Left cardiac atrium (tissue), 4 donors: ENCODE measurements at regions of chr20 and their contacts with region 1.

Region 1: GRCh38 chr20:32779500-32780211 is 17.5 kb downstream of the DNMT3B start:
- DNase-seq: no peak
- ATAC-seq: no peak

Region 2: GRCh38 chr20:32674362-32674789 is 105.3 kb before region 1 on chr20:
- intact Hi-C with region 1: loop called (anchors 1 to 5 kb)
- DNase-seq: no peak
- ATAC-seq: no peak

Region 3: GRCh38 chr20:32888636-32889035 is 109.0 kb after region 1 on chr20:
- intact Hi-C with region 1: no loop called
- DNase-seq: no peak
- ATAC-seq: no peak